K562 (cell line): ENCODE measurements at regions of chr3 and their contacts with region 1.

Region 1: DNA sequence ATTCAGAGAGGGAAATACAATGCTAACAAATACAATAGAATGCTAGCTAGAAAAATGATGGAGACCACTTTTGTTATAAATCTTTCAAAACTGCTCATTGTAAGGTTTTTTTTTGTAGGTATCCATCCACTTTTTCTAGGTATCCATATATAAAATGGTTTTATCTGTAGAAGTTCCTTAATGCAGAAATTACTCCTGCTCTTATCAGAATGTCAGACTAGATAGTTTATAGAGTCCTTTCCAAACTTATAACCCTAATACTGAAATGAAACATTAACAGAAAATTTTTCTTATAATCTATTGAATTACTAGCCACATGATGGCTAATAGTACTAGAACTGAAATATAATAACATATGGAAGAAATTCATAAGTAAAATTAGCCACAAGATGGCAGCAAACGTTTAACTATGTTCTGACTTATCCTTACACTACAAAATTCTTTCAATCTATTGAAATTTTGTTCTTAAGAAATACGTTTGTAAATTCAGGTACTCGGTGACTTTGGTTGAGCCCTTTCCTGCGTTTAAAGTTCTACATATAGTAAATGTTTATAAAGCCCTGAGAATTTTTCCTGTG is 58.5 kb downstream of the ECT2 start:
- DNase-seq: peak in 2 of 4 experiments; percentile 11 to 47
- ATAC-seq: peak; percentile 43; the same call in 2 of the 3 replicates
- H3K4me3 ChIP-seq: no peak overlapping the region
- H3K27ac ChIP-seq: no peak overlapping the region
- H3K4me1 ChIP-seq: no peaks in the 10 kb centered on the region
- H3K27me3 ChIP-seq: no peaks in the 10 kb centered on the region
- CTCF ChIP-seq: peak in 1 of 3 experiments; percentile 48; a peak in 3 of 6 replicates
- EP300 ChIP-seq: no peak
- POLR2A ChIP-seq: no peak
- RAD21 ChIP-seq: peak; percentile 60

Region 2: DNA sequence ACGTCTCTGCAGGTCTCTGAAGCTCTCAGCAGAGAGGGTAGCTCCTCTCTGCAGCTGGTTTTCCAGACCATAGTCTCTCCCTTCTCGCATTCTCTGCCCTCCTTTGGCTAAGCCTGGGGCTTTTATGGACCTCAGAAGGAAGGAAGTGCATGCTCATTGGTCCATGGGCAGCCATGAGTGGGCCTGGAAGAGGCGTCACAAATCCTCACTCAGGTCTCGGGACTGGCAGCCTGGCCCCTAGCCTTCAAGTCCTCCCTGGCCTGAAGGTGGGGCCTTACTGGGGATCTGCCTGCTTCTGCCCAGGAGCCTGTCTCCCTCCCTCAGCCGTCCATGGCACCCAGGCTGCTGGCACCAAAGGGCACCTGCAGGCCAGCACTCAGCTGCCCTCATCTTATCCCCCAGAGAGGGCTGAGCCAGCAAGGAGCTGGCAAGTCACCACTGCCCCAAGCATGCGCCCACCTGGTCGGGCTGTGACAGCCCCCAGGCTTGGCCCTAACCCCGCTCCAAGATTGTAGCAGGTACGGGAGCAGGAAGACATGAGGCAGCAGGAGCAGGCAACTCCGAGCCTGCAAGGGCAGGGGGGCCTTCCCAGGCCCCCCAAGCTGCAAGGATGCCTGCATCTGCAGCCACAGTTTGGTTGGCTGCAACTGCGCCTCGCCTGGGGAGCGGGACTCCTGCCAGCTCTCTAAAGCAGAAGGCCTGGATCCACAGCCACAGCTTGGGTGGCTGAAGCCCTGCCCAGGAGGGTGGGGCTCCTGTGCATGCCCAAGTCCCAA is 398.2 kb before region 1 on chr3:
- CTCF ChIA-PET with region 1: no interaction called
- POLR2A ChIA-PET with region 1: no interaction called
- in situ Hi-C with region 1: no loop called
- intact Hi-C with region 1: no loop called
- DNase-seq: no peak
- ATAC-seq: peak; percentile 45; the same call in 1 of the 3 replicates
- H3K4me3 ChIP-seq: no peak overlapping the region
- H3K27ac ChIP-seq: no peak overlapping the region
- H3K4me1 ChIP-seq: peaks cover 0 to 8% of the 10 kb centered on the region in 2 experiments; a peak in 1 of 5 replicates
- H3K27me3 ChIP-seq: peaks cover 8 to 17% of the 10 kb centered on the region in 2 experiments; a peak in 4 of 5 replicates
- CTCF ChIP-seq: no peak
- EP300 ChIP-seq: no peak
- POLR2A ChIP-seq: no peak
- RAD21 ChIP-seq: no peak

Region 3: DNA sequence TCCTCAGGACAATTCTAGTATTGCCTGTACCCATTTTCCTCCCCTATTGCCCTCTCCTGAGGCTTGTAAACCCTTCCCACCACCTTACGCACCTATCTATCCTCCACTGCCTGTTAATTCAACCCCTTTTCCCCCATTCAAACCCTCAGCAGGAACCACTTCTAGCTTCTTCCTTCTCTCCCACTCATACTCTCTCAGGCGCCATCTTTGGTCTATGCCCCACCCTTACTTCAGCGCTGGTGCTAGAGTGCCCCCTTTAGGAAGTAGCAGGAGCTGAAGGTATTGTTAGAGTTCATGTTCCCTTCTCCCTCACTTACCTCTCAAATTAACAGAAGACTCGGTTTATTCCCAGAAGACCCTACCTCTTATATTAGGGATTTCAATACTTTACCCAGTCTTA is 466.7 kb after region 1 on chr3:
- CTCF ChIA-PET with region 1: no interaction called
- POLR2A ChIA-PET with region 1: no interaction called
- in situ Hi-C with region 1: no loop called
- intact Hi-C with region 1: loop called (anchors 2 kb)
- DNase-seq: peak; percentile 41 to 51 (median 45)
- ATAC-seq: peak; percentile 95
- H3K4me3 ChIP-seq: no peak overlapping the region
- H3K27ac ChIP-seq: no peak overlapping the region
- H3K4me1 ChIP-seq: no peaks in the 10 kb centered on the region
- H3K27me3 ChIP-seq: no peaks in the 10 kb centered on the region
- CTCF ChIP-seq: peak; percentile 53 to 58 (median 54); a peak in 5 of 6 replicates
- EP300 ChIP-seq: no peak
- POLR2A ChIP-seq: no peak
- RAD21 ChIP-seq: peak; percentile 75